ACHN (cell line): ENCODE measurements at regions of chr16 and their contacts with region 1.

Region 1: GRCh38 chr16:88672776-88673175 is 9.9 kb upstream of the MVD start:
- DNase-seq: peak; percentile 41

Region 2: GRCh38 chr16:88452482-88453216 is 220.1 kb before region 1 on chr16:
- in situ Hi-C with region 1: no loop called
- DNase-seq: peak; percentile 95

Region 3: DNA sequence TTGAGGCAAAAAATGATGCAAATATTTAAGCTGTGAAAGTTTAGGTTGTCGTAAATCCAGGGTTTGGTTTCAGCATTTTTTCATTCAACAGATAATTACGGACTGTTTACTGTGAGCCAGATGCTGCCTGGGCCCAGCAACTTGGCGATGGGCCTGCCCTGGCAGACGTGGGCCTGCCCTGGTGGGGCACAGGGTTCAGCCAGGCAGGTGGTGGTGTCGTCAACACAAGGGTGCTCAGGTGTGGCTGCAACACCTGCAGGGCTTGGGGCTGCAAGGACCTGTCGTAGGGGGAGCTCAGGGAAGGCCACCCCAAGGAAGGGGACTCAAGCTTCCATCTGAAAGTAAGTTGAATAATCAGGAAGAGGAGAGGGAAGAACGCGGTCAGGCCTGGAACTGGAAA is 87.5 kb before region 1 on chr16:
- in situ Hi-C with region 1: no loop called
- DNase-seq: no peak

Region 4: GRCh38 chr16:88785106-88785924 is 112.5 kb after region 1 on chr16 and contains the start of gene PIEZO1:
- in situ Hi-C with region 1: loop called (anchors 10 kb)
- DNase-seq: peak; percentile 75

Region 5: DNA sequence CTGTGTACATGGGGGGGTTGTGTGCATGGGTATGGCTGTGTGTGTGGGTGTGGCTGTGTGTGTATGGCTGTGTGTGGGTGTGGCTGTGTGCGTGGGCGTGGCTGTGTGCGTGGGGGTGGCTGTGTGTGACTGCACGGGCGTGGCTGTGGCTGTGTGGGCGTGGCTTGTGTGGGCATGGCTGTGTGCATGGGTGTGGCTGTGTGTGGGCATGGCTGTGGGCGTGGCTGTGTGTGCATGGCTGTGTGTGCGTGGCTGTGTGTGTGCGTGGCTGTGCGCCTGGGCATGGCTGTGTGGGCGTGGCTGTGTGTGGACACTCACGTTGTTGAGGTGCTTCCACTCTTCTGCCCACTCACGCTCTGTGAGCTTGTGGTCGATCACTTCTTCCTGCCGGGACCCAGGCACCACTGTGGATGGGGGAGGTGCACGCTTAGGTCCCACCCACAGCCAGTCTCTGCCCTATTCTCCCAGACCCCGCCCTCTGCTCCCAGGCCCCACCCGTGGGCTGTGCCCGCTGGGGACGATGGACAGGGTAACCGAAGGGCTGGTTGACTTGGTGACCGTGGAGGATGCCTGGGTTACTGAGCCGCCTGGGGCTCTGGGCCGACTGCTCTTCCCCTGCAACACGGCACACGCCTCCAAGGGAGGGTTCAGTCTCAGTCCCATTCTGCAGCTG is 209.7 kb after region 1 on chr16:
- in situ Hi-C with region 1: no loop called
- DNase-seq: no peak